Panc1 (cell line): ENCODE measurements at regions of chr15 and their contacts with region 1.

Region 1: DNA sequence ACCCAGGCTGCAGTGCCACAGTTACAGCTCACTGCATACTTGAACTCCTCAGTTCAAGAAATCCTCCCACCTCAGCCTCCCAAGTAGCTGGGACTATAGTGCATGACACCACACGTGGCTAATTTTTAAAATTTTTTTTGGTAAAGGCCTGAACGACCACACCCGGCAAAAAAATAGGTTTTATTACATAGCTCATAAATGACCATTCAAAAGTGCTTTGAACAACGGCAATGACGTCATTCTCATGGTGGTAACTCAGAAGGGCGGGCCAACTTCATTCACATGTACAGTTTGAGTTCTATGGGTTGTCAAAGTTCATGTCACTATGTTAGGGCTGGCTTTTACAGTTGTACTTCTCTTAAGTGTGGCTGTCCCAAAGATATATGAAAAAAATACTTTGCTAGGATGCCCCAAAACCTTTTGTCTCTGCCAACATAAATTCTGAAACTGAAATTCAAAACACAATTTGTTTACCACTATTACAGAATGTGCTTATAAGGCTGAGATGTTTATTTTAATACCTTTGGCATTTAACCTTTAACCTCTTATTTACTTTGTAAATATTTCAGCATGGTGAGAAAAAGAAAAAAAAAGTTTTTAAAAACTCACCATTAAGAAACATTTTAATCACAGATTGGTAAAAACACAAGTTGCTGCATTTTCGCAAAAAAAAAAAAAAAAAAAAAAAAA is 6.2 kb downstream of the MYO1E start:
- DNase-seq: no peak
- ATAC-seq: no peak
- H3K4me3 ChIP-seq: no peak overlapping the region
- H3K27ac ChIP-seq: no peak overlapping the region
- H3K4me1 ChIP-seq: peaks cover 32% of the 10 kb centered on the region
- H3K27me3 ChIP-seq: no peaks in the 10 kb centered on the region
- CTCF ChIP-seq: no peak

Region 2: GRCh38 chr15:59349680-59350420 is 16.6 kb before region 1 on chr15:
- CTCF ChIA-PET with region 1: interaction called, 6 read pairs
- POLR2A ChIA-PET with region 1: interaction called, 11 read pairs
- in situ Hi-C with region 1: no loop called
- intact Hi-C with region 1: no loop called
- DNase-seq: peak; percentile 82
- ATAC-seq: peak; percentile 98
- H3K4me3 ChIP-seq: no peak overlapping the region
- H3K27ac ChIP-seq: peak overlapping the region; percentile 83
- H3K4me1 ChIP-seq: peaks cover 43% of the 10 kb centered on the region
- H3K27me3 ChIP-seq: no peaks in the 10 kb centered on the region
- CTCF ChIP-seq: no peak

Region 3: DNA sequence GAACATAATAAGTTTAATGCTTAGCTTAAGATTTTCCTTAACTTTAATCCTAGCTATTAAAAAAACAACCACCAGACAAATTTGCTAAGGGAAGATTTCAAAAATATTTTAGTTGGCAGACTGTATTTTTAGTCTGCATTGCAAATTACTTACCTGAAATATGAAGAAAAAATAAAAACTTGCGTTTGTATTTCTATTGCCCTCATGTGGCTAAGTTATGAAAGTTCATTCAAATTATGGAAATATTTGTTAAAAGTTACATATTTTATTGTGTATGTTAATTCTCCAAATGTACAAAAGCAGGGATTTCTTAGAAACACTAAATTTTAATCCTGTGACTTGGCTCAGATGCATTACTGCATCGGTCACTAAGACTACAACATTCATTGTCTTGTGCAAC is 275.9 kb after region 1 on chr15:
- CTCF ChIA-PET with region 1: interaction called, 8 read pairs
- POLR2A ChIA-PET with region 1: interaction called, 14 read pairs
- in situ Hi-C with region 1: no loop called
- intact Hi-C with region 1: no loop called
- DNase-seq: no peak
- ATAC-seq: no peak
- H3K4me3 ChIP-seq: no peak overlapping the region
- H3K27ac ChIP-seq: no peak overlapping the region
- H3K4me1 ChIP-seq: no peaks in the 10 kb centered on the region
- H3K27me3 ChIP-seq: no peaks in the 10 kb centered on the region
- CTCF ChIP-seq: no peak; the same call in 1 of the 2 replicates